ENCODE measurements at regions of chr15 and their contacts with region 1.

Region 1: DNA sequence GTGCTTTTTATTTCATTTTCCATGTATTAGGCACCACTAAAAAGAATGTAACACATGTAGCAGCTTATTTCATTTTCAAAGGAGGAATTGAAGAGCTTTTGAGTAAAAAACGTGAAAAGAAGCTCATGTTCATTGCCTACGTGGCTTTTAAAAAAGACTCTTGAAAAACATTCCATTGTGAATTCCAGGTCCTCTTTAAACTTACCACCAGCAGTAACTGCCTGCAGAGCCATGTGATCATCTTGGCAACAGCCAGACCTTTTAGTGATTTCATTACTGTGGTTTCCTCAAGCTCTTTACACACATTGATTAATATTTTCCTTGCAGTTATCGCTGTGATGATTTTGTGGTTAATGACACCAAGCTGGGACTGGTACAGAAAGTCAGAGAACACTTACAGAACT is 43.8 kb upstream of the FBXL22 start:
- DNase-seq: no peak
- ATAC-seq: peak; percentile 76
- H3K4me3 Mint-ChIP-seq: peak overlapping the region; percentile 39
- H3K27ac Mint-ChIP-seq: peak overlapping the region; percentile 96
- H3K4me1 Mint-ChIP-seq: peaks cover 43% of the 10 kb centered on the region
- H3K27me3 Mint-ChIP-seq: no peaks in the 10 kb centered on the region
- CTCF ChIP-seq: no peak

Region 2: DNA sequence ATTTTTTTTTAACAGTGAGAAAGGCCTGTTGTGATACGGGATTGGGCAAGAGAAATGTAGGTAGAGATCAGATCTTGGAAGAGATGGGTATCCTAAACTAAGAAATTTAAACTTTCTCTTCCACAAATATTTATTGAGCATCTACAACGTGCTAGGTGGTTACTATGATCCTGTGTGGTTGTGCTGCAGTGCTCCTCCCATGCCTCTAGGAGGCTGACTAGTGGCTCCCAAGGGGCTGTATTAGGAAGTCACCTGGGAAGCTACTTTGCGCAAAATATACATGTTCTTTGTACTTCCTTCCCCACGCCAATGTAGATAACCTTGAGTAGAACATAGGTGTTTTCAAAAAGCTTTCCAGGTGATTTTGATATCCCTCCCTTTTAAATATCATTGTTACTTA is 21.8 kb before region 1 on chr15:
- CTCF ChIA-PET with region 1: interaction called, 11 read pairs
- POLR2A ChIA-PET with region 1: no interaction called
- DNase-seq: peak; percentile 24
- ATAC-seq: peak; percentile 95
- H3K4me3 Mint-ChIP-seq: no peak overlapping the region
- H3K27ac Mint-ChIP-seq: no peak overlapping the region
- H3K4me1 Mint-ChIP-seq: peaks cover 61% of the 10 kb centered on the region
- H3K27me3 Mint-ChIP-seq: no peaks in the 10 kb centered on the region
- CTCF ChIP-seq: peak; percentile 55

Region 3: DNA sequence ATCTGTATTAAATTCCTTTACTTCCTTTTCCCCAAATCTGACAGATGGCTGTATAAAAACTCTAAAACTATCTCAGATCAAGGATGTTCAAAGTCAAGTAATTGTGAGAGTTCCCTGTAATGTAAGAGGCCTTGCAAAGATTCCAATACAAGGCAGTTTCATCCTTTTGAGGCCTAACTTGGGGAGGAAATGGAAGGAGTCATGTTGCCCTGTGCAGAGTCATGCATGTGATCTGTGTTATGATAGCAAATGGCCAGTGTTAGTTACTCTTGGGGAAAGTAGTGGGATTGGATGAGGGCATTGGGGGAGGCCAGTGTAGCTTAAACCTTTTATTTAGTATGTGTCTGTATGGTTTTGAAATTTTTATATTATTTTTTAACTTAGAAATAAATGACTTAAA is 20.1 kb after region 1 on chr15:
- CTCF ChIA-PET with region 1: no interaction called
- POLR2A ChIA-PET with region 1: no interaction called
- DNase-seq: no peak
- ATAC-seq: no peak
- H3K4me3 Mint-ChIP-seq: no peak overlapping the region
- H3K27ac Mint-ChIP-seq: no peak overlapping the region
- H3K4me1 Mint-ChIP-seq: no peaks in the 10 kb centered on the region
- H3K27me3 Mint-ChIP-seq: no peaks in the 10 kb centered on the region
- CTCF ChIP-seq: no peak

Measured in WTC11 (cell line).